ENCODE measurements at regions of chr9 and their contacts with region 1.

Region 1: DNA sequence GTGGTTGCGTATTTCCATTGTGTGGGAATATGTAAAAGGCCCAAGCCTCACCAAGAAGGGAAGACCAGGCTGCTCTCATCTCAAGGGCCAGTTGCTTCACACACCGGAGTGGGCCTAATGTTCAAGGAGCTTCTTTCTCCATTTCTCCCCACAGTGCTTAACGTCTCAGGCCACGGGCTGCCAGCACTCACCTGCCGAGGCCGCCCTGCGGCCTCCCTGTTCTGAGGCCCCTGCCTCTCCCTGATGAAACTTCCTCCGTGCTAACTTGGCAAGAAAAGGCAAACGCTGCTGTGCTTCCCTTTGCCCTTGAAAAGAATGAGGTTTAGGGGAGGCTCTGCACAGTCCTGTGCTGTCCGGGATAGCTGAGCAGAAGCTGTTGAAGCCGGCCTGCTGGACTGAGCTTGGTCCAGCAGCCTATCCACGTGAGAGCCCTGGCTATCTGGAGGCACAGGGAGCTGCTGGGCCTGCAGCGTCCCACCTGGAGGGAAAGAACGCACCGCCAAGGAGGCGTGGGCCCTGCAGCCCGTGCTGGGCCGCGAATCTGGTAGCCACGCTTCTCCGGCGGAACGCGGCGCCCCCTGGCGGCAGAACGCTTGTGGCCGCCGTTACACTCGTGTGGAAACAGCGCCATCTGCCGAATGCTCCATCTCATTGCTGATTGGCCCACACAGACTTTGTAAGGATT is 73.5 kb upstream of the PRSS3 start:
- DNase-seq: peak; percentile 62 to 96 (median 87)

Region 2: GRCh38 chr9:33623658-33624586 is 97.9 kb before region 1 on chr9:
- intact Hi-C with region 1: loop called (anchors 1 kb)
- DNase-seq: peak; percentile 45 to 89 (median 76)